CD8-positive, alpha-beta T cell (primary cell): ENCODE measurements at regions of chr2 and their contacts with region 1.

Region 1: DNA sequence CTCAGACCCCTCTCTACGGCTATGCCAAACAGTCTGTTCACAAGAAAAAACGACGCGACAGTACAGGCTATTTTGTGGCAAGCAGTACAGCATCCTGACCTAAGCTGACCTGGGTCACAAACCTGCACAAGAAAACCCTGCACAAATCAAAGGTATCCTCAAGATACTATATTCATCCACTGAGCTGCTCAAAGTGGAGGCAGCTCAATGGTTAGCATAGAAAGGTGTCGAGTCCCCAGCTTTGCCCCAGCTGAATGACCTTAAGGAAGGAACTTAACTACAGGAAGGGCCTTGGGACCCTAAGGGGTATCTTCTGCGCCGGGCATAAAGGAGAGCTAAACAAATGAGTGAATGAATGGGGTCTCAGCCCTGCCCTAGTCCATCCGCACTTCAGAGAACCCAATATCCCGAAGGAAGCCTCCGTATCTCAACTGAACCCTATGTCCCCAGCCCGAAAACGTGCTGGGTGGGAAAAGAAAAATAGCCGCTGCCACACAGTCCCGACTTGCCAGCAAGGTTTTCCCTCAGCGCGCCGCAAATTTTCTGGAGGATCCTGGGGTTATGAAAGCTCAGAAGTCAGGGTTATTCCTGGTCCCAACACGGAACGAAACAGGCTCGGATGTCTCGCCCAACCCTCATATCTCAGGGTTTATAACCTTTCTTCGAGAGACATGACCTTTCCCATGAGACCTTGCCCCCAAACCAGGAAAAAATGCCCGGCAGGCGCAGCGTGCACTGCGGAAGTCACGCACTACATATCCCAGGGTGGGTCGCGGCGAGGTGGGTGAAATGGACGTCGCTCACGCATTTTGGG is at the start of gene FASTKD1:
- DNase-seq: peak; percentile 58 to 94 (median 84)
- ATAC-seq: peak; percentile 100
- H3K4me3 ChIP-seq: peak within 1 kb of the TSS; percentile 91 to 92
- H3K4me3 Mint-ChIP-seq: peak within 1 kb of the TSS; percentile 95
- H3K27ac ChIP-seq: peak within 1 kb of the TSS; percentile 55 to 81
- H3K27ac Mint-ChIP-seq: peak within 1 kb of the TSS; percentile 90
- H3K4me1 ChIP-seq: peaks cover 6% of the 10 kb centered on the region
- H3K4me1 Mint-ChIP-seq: peaks cover 28% of the 10 kb centered on the region
- H3K27me3 ChIP-seq: no peaks in the 10 kb centered on the region
- H3K27me3 Mint-ChIP-seq: no peaks in the 10 kb centered on the region
- CTCF ChIP-seq: no peak
- total RNA-seq, gene FASTKD1: 5.1 to 6.1 TPM

Region 2: GRCh38 chr2:169479257-169480078 is 93.9 kb before region 1 on chr2 and contains the start of gene BBS5:
- CTCF ChIA-PET with region 1: no interaction called
- POLR2A ChIA-PET with region 1: interaction called, 5 read pairs
- intact Hi-C with region 1: loop called (anchors 5 kb)
- DNase-seq: peak; percentile 42 to 82 (median 67)
- ATAC-seq: peak; percentile 96
- H3K4me3 ChIP-seq: peak within 1 kb of the TSS; percentile 76 to 77
- H3K4me3 Mint-ChIP-seq: peak within 1 kb of the TSS; percentile 95
- H3K27ac ChIP-seq: peak within 1 kb of the TSS in 1 of 2 experiments; percentile 44
- H3K27ac Mint-ChIP-seq: peak within 1 kb of the TSS; percentile 81
- H3K4me1 ChIP-seq: peaks cover 12% of the 10 kb centered on the region
- H3K4me1 Mint-ChIP-seq: peaks cover 20% of the 10 kb centered on the region
- H3K27me3 ChIP-seq: no peaks in the 10 kb centered on the region
- H3K27me3 Mint-ChIP-seq: no peaks in the 10 kb centered on the region
- CTCF ChIP-seq: peak; percentile 34
- total RNA-seq, gene BBS5: 2.1 to 2.7 TPM

Region 3: DNA sequence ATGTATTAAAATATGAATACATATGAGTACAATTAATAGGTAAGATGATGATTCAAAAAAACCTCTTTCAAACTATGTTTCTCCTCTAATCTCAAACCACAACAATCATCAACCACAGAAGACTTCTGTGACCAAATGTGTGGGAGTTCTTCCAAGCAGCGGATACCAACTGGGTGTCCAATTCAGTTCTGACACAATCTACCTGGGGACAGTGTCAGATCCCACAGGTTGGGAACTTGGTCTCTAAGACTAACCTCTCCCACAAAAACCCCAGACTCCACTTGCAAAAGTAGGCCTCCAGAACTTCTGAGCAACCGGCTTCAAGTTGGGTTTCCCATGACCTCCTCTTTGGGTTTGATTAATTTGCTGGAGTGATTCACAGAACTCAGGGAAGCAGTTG is 26.6 kb before region 1 on chr2:
- CTCF ChIA-PET with region 1: no interaction called
- POLR2A ChIA-PET with region 1: no interaction called
- intact Hi-C with region 1: no loop called
- DNase-seq: no peak
- ATAC-seq: no peak
- H3K4me3 ChIP-seq: no peak overlapping the region
- H3K4me3 Mint-ChIP-seq: no peak overlapping the region
- H3K27ac ChIP-seq: no peak overlapping the region
- H3K27ac Mint-ChIP-seq: no peak overlapping the region
- H3K4me1 ChIP-seq: no peaks in the 10 kb centered on the region
- H3K4me1 Mint-ChIP-seq: no peaks in the 10 kb centered on the region
- H3K27me3 ChIP-seq: no peaks in the 10 kb centered on the region
- H3K27me3 Mint-ChIP-seq: no peaks in the 10 kb centered on the region
- CTCF ChIP-seq: no peak

Region 4: GRCh38 chr2:169562519-169562918 is 10.8 kb before region 1 on chr2:
- CTCF ChIA-PET with region 1: no interaction called
- POLR2A ChIA-PET with region 1: interaction called, 11 read pairs
- intact Hi-C with region 1: no loop called
- DNase-seq: no peak
- ATAC-seq: no peak
- H3K4me3 ChIP-seq: no peak overlapping the region
- H3K4me3 Mint-ChIP-seq: no peak overlapping the region
- H3K27ac ChIP-seq: no peak overlapping the region
- H3K27ac Mint-ChIP-seq: no peak overlapping the region
- H3K4me1 ChIP-seq: no peaks in the 10 kb centered on the region
- H3K4me1 Mint-ChIP-seq: no peaks in the 10 kb centered on the region
- H3K27me3 ChIP-seq: no peaks in the 10 kb centered on the region
- H3K27me3 Mint-ChIP-seq: no peaks in the 10 kb centered on the region
- CTCF ChIP-seq: no peak

Region 5: GRCh38 chr2:169584005-169584877 is 10.9 kb after region 1 on chr2 and contains the start of gene PPIG:
- CTCF ChIA-PET with region 1: interaction called, 3 read pairs
- POLR2A ChIA-PET with region 1: interaction called, 20 read pairs
- intact Hi-C with region 1: loop called (anchors 1 kb)
- DNase-seq: peak; percentile 74 to 97 (median 88)
- ATAC-seq: peak; percentile 91
- H3K4me3 ChIP-seq: peak within 1 kb of the TSS; percentile 85 to 100
- H3K4me3 Mint-ChIP-seq: peak within 1 kb of the TSS; percentile 97
- H3K27ac ChIP-seq: peak within 1 kb of the TSS; percentile 97 to 98
- H3K27ac Mint-ChIP-seq: peak within 1 kb of the TSS; percentile 100
- H3K4me1 ChIP-seq: peaks cover 25% of the 10 kb centered on the region
- H3K4me1 Mint-ChIP-seq: peaks cover 39% of the 10 kb centered on the region
- H3K27me3 ChIP-seq: no peaks in the 10 kb centered on the region
- H3K27me3 Mint-ChIP-seq: no peaks in the 10 kb centered on the region
- CTCF ChIP-seq: no peak
- total RNA-seq, gene PPIG: 89.8 to 104 TPM

Region 6: GRCh38 chr2:169619946-169620345 is 46.6 kb after region 1 on chr2:
- CTCF ChIA-PET with region 1: no interaction called
- POLR2A ChIA-PET with region 1: no interaction called
- intact Hi-C with region 1: no loop called
- DNase-seq: no peak
- ATAC-seq: no peak
- H3K4me3 ChIP-seq: no peak overlapping the region
- H3K4me3 Mint-ChIP-seq: no peak overlapping the region
- H3K27ac ChIP-seq: no peak overlapping the region
- H3K27ac Mint-ChIP-seq: no peak overlapping the region
- H3K4me1 ChIP-seq: no peaks in the 10 kb centered on the region
- H3K4me1 Mint-ChIP-seq: peaks cover 42% of the 10 kb centered on the region
- H3K27me3 ChIP-seq: no peaks in the 10 kb centered on the region
- H3K27me3 Mint-ChIP-seq: no peaks in the 10 kb centered on the region
- CTCF ChIP-seq: no peak

Region 7: GRCh38 chr2:169670215-169670651 is 96.9 kb after region 1 on chr2:
- CTCF ChIA-PET with region 1: no interaction called
- POLR2A ChIA-PET with region 1: no interaction called
- intact Hi-C with region 1: no loop called
- DNase-seq: no peak
- ATAC-seq: no peak
- H3K4me3 ChIP-seq: no peak overlapping the region
- H3K4me3 Mint-ChIP-seq: no peak overlapping the region
- H3K27ac ChIP-seq: no peak overlapping the region
- H3K27ac Mint-ChIP-seq: no peak overlapping the region
- H3K4me1 ChIP-seq: no peaks in the 10 kb centered on the region
- H3K4me1 Mint-ChIP-seq: no peaks in the 10 kb centered on the region
- H3K27me3 ChIP-seq: no peaks in the 10 kb centered on the region
- H3K27me3 Mint-ChIP-seq: peaks cover 5% of the 10 kb centered on the region
- CTCF ChIP-seq: no peak

Region 8: GRCh38 chr2:169824373-169825333 is 251.3 kb after region 1 on chr2 and contains the start of gene METTL5:
- CTCF ChIA-PET with region 1: interaction called, 4 read pairs
- POLR2A ChIA-PET with region 1: interaction called, 3 read pairs
- intact Hi-C with region 1: loop called (anchors 1 to 5 kb)
- DNase-seq: peak; percentile 55 to 87 (median 73)
- ATAC-seq: peak; percentile 61
- H3K4me3 ChIP-seq: peak within 1 kb of the TSS; percentile 87
- H3K4me3 Mint-ChIP-seq: peak within 1 kb of the TSS; percentile 95
- H3K27ac ChIP-seq: peak within 1 kb of the TSS; percentile 59 to 72
- H3K27ac Mint-ChIP-seq: peak within 1 kb of the TSS; percentile 92
- H3K4me1 ChIP-seq: peaks cover 37% of the 10 kb centered on the region
- H3K4me1 Mint-ChIP-seq: peaks cover 61% of the 10 kb centered on the region
- H3K27me3 ChIP-seq: no peaks in the 10 kb centered on the region
- H3K27me3 Mint-ChIP-seq: no peaks in the 10 kb centered on the region
- CTCF ChIP-seq: peak; percentile 93
- total RNA-seq, gene METTL5: 13.7 to 15.8 TPM

Region 9: DNA sequence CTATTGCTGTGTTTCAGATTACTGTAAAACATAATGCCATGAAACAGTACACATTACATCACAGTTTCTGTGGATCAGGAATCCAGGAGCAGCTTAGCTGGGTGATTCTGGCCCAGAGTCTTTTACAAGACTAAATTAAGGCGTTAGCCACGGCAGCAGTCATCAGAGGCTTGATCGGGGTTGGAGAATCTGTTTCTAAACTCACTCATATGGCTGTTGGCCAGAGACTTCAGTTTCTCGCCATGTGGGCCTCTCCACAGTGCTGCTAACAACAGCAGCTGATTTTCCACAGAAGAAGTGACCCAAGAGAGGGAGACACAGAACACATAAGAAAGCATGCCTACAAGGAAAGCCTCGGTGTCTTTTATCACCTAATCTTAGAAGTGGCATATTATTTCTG is 515.4 kb after region 1 on chr2:
- CTCF ChIA-PET with region 1: no interaction called
- POLR2A ChIA-PET with region 1: no interaction called
- intact Hi-C with region 1: no loop called
- DNase-seq: no peak
- ATAC-seq: no peak
- H3K4me3 ChIP-seq: no peak overlapping the region
- H3K4me3 Mint-ChIP-seq: no peak overlapping the region
- H3K27ac ChIP-seq: no peak overlapping the region
- H3K27ac Mint-ChIP-seq: no peak overlapping the region
- H3K4me1 ChIP-seq: no peaks in the 10 kb centered on the region
- H3K4me1 Mint-ChIP-seq: no peaks in the 10 kb centered on the region
- H3K27me3 ChIP-seq: no peaks in the 10 kb centered on the region
- H3K27me3 Mint-ChIP-seq: no peaks in the 10 kb centered on the region
- CTCF ChIP-seq: no peak